A549 (cell line): ENCODE measurements at regions of chr11 and their contacts with region 1.

Region 1: DNA sequence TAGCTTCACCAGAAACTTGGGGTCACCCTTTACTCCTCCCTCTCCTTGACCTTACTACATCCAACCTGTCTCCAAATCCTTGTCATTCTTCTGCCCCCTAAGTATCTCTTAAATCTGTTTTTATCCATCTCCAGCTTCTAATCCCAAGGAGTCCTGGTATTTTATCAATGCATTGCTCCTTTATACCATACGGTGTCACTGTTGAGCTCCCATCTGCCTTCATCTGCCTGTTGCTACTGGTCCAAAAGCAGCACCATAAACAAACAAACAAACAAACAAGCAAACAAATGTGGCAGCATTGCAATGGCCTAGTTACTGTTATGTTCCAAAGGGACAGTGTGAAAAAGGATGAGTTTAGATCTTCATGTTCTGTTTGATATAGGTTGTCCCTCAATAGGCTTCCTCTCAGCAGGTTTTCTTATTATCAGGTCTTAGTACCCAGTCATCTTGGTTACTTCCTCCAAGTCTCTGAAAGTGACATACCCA is 34.2 kb downstream of the DNHD1 start:
- DNase-seq: peak; percentile 57 to 79
- ATAC-seq: peak; percentile 88 to 93
- H3K4me3 ChIP-seq: no peak overlapping the region
- H3K27ac ChIP-seq: no peak overlapping the region
- H3K4me1 ChIP-seq: no peaks in the 10 kb centered on the region
- CTCF ChIP-seq: peak; percentile 76
- EP300 ChIP-seq: no peak
- POLR2A ChIP-seq: no peak
- RAD21 ChIP-seq: peak; percentile 69 to 76

Region 2: GRCh38 chr11:6544921-6545850 is 13.9 kb after region 1 on chr11:
- CTCF ChIA-PET with region 1: interaction called, 95 read pairs
- POLR2A ChIA-PET with region 1: no interaction called
- DNase-seq: no peak
- ATAC-seq: peak in 1 of 2 experiments; percentile 21; a peak in 2 of 6 replicates
- H3K4me3 ChIP-seq: no peak overlapping the region
- H3K27ac ChIP-seq: no peak overlapping the region
- H3K4me1 ChIP-seq: no peaks in the 10 kb centered on the region
- CTCF ChIP-seq: no peak
- EP300 ChIP-seq: no peak
- POLR2A ChIP-seq: no peak
- RAD21 ChIP-seq: no peak

Region 3: DNA sequence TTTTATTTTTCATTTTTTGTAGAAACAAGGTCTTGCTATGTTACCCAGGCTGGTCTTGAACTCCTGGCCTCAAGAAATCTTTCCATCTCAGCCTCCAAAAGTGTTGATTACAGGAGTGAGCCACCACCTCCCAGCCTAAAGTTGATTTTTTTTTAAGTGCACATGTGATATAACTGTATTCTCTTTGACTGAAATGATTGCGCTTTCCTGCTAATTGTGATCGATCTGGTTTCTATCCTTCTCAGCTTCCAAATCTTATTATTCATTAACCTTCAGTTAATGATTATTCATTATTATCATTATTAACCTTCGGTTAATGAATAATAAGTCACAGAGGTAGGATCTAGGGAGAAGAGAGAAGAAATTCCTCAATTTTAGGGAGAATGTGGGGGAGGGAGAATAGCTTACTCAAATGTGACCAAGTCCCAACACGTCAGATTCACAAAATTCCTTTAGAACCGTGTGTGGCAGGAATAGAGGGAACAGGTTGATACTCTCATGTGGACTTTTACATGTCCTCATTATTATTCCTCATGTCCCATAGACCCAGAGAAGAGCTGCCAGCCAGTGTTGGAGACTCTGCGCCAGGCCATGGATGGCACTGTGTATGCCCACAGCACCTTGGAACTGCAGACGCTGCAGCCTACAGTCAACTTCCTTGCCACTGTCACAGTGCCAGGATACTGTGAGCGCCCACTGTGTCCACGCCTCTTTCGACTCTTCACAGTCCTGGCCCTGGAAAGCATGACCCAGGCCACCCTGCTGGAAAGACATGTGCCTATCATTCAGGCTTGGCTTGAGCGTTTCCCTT is 25.0 kb after region 1 on chr11:
- CTCF ChIA-PET with region 1: interaction called, 15 read pairs
- POLR2A ChIA-PET with region 1: no interaction called
- DNase-seq: no peak
- ATAC-seq: peak in 1 of 2 experiments; percentile 32; a peak in 3 of 6 replicates
- H3K4me3 ChIP-seq: no peak overlapping the region
- H3K27ac ChIP-seq: no peak overlapping the region
- H3K4me1 ChIP-seq: no peaks in the 10 kb centered on the region
- CTCF ChIP-seq: no peak
- EP300 ChIP-seq: no peak
- POLR2A ChIP-seq: no peak
- RAD21 ChIP-seq: no peak

Region 4: GRCh38 chr11:6603287-6604080 is 72.2 kb after region 1 on chr11 and contains the starts of genes ILK and RRP8:
- CTCF ChIA-PET with region 1: interaction called, 10 read pairs
- POLR2A ChIA-PET with region 1: no interaction called
- DNase-seq: peak; percentile 91 to 92
- ATAC-seq: peak; percentile 80 to 90
- H3K4me3 ChIP-seq: peak within 1 kb of the TSS; percentile 79
- H3K27ac ChIP-seq: peak within 1 kb of the TSS; percentile 90 to 98
- H3K4me1 ChIP-seq: peaks cover 39% of the 10 kb centered on the region
- CTCF ChIP-seq: no peak
- EP300 ChIP-seq: no peak
- POLR2A ChIP-seq: peak; percentile 58
- RAD21 ChIP-seq: no peak
- polyA plus RNA-seq, gene ILK: 109 and 120 TPM in 2 replicates
- polyA plus RNA-seq, gene RRP8: 20.5 and 25.9 TPM in 2 replicates

Region 5: GRCh38 chr11:6705905-6706535 is 174.7 kb after region 1 on chr11:
- CTCF ChIA-PET with region 1: interaction called, 17 read pairs
- POLR2A ChIA-PET with region 1: no interaction called
- DNase-seq: peak; percentile 39 to 45
- ATAC-seq: peak; percentile 68 to 76; a peak in 5 of 6 replicates
- H3K4me3 ChIP-seq: no peak overlapping the region
- H3K27ac ChIP-seq: no peak overlapping the region
- H3K4me1 ChIP-seq: no peaks in the 10 kb centered on the region
- CTCF ChIP-seq: peak; percentile 76
- EP300 ChIP-seq: no peak
- POLR2A ChIP-seq: no peak
- RAD21 ChIP-seq: peak; percentile 60 to 62